AG04449 (cell line): ENCODE measurements at regions of chr7 and their contacts with region 1.

Region 1: DNA sequence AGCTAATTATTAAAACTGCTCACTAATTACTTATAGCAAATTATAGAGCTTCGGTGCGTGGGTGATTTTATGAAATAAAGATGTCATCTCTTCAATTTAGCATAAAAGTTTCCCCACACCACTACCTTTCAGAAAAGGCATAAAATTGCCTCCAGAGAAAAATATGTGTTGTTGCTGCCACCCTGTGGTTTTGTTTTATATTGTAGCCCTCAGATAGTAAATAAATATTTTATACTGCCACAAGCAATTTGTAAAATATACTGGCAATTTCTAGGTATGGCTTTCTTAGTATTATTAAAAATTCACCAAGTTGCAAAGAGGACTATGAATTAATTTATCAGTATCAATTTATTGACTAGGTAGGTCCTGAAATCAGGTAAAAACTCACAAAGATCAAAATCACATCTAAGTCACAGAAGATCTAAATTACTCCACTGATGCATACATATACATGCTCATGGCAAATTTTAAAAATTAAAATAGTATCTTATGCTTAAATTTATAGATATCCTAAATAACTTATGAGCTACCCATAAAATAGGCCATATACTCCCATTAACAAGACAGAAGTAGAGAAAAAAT is 26.5 kb downstream of the ASNS start:
- DNase-seq: no peak
- H3K4me3 ChIP-seq: no peak overlapping the region
- CTCF ChIP-seq: peak; percentile 13

Region 2: GRCh38 chr7:97104719-97105238 is 740.9 kb before region 1 on chr7:
- CTCF ChIA-PET with region 1: interaction called, 30 read pairs
- POLR2A ChIA-PET with region 1: no interaction called
- DNase-seq: no peak
- H3K4me3 ChIP-seq: no peak overlapping the region
- CTCF ChIP-seq: peak; percentile 69

Region 3: DNA sequence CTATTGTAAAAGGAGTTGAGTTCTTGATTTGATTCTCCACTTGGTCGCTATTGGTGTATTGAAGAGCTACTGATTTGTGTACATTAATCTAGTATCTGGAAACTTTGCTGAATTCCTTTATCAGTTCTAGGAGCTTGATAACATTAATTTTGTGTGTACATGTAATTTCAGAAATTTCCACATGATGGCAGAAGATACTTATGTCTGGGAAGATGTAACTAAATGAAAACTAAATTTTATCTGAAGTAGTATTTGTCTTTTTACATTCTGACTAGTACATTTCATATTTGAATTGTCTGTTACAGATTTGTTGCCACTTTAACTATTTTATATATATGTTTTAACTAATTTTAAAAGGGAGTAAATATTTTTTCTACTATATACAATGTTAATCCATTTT is 700.6 kb before region 1 on chr7:
- CTCF ChIA-PET with region 1: interaction called, 37 read pairs
- POLR2A ChIA-PET with region 1: no interaction called
- DNase-seq: no peak
- H3K4me3 ChIP-seq: no peak overlapping the region
- CTCF ChIP-seq: peak; percentile 22

Region 4: GRCh38 chr7:97857544-97857943 is 11.8 kb after region 1 on chr7:
- CTCF ChIA-PET with region 1: interaction called, 19 read pairs
- POLR2A ChIA-PET with region 1: no interaction called
- DNase-seq: no peak
- H3K4me3 ChIP-seq: no peak overlapping the region
- CTCF ChIP-seq: no peak

Region 5: GRCh38 chr7:98724591-98724990 is 878.9 kb after region 1 on chr7:
- CTCF ChIA-PET with region 1: no interaction called
- POLR2A ChIA-PET with region 1: no interaction called
- DNase-seq: no peak
- H3K4me3 ChIP-seq: no peak overlapping the region
- CTCF ChIP-seq: no peak